ENCODE measurements at regions of chr10 and their contacts with region 1.

Region 1: GRCh38 chr10:23643111-23643780 is 204.4 kb downstream of the OTUD1 start:
- DNase-seq: peak in 1 of 6 donors; percentile 14
- ATAC-seq: peak in 2 of 4 donors; percentile 62 to 84
- H3K4me3 ChIP-seq: no peak overlapping the region
- H3K27ac ChIP-seq: no peak overlapping the region
- H3K4me1 ChIP-seq: peaks cover 0 to 5% (median 0%) of the 10 kb centered on the region in 3 donors
- H3K27me3 ChIP-seq: no peaks in the 10 kb centered on the region
- CTCF ChIP-seq: no peak

Region 2: GRCh38 chr10:23338178-23338828 is 304.9 kb before region 1 on chr10:
- intact Hi-C with region 1: loop called in 1 of 3 experiments (anchors 10 kb)
- DNase-seq: peak in 4 of 6 donors; percentile 19 to 37 (median 31)
- ATAC-seq: peak; percentile 68 to 96 (median 88)
- H3K4me3 ChIP-seq: no peak overlapping the region
- H3K27ac ChIP-seq: no peak overlapping the region
- H3K4me1 ChIP-seq: no peaks in the 10 kb centered on the region
- H3K27me3 ChIP-seq: no peaks in the 10 kb centered on the region
- CTCF ChIP-seq: peak in 1 of 4 donors; percentile 20

Region 3: DNA sequence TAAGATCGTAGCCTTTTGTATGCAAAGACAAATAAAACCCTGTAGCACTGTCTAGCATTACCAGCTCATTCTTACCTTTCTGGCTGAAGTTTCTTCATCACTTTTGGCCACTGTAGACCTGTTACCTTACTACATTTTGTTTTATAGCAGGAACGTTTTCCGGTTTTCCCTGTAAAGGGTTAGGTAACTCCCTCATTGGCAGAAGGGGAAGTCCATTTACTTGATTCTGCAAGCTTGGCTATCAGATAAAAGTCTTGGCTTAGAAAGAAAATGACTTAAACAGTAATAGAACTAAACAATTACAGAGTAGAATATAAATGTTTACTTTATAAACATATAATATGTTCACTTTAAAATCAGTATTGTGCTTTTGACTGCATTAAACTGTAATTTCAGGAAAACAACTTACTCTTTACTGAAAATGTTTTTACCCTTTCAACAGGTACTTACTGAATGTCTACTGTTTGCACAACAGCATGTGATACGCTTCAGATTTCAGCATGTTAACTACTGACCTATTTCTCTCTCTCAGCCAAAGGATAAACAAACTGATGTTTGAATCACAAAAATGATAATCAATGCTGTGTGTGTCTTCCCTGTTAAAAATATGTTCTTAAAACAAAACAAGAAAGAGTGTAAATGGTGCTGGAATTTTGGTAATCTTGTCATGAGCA is 137.3 kb before region 1 on chr10:
- intact Hi-C with region 1: no loop called
- DNase-seq: no peak
- ATAC-seq: peak in 1 of 4 donors; percentile 44
- H3K4me3 ChIP-seq: no peak overlapping the region
- H3K27ac ChIP-seq: no peak overlapping the region
- H3K4me1 ChIP-seq: no peaks in the 10 kb centered on the region
- H3K27me3 ChIP-seq: no peaks in the 10 kb centered on the region
- CTCF ChIP-seq: no peak